ENCODE measurements at regions of chr1 and their contacts with region 1.

Region 1: DNA sequence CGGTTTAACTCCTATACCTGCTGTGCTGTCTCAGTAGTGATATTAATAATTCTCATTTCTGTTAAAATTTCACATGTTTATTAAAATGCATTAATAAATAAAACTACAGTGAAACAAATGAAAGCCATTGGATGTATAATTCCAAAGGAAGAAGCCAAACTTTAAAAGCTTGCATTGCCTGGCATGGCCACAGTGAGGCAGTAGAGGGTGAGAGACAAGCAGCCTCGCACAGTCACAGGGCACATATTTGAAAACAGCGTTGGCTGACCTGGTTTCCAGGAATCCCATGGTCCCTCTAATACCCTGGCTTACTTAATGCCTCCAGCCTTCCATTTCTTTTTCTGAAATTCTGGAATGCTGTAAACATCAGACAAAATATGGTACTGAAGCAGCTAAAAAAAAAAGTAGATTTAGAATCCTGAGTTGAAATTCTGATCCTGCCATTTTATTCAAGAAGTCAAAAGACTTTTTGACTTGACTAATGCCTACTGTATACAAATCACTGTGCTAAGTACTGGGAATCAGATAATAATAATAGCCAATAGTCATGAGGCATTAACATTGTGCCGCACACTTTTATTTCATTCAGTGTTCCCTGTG is 6.7 kb upstream of the RNASEL start:
- H3K4me3 ChIP-seq: no peak overlapping the region
- H3K27ac ChIP-seq: no peak overlapping the region
- H3K4me1 ChIP-seq: no peaks in the 10 kb centered on the region
- CTCF ChIP-seq: peak; percentile 52

Region 2: DNA sequence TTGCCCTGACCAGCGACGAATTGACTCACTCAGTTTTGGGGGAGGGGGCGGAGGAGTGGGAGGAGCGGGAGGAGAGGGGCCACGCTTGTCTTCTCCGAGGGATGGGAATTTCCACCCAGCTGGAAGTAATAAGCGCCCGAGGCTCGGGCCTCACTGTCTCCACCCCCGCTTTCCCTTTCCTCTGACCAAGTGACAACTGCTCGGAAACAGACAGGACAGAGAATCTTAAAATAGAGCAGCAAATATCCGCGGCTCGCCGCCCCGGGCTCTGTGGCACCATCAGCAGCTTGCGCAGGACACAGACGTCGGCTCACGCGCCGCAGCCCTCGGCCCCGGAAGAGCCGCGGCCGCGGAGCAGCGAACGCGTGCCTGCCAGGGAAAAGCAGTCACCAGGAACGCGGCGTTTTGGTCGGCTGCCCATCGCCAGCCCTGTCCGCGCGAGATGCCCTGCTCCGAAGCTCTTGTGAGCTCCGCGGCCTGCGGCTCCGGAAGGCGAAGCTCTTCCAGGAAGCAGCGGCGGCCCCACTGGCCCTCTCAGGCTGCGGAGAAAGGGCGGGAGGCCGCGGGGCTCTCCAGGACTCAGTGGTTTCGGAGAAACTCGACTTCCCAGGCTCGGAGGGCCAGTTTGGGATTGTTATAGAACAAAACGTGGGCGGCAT is 19.2 kb after region 1 on chr1:
- CTCF ChIA-PET with region 1: interaction called, 12 read pairs
- POLR2A ChIA-PET with region 1: no interaction called
- H3K4me3 ChIP-seq: peak overlapping the region; percentile 43
- H3K27ac ChIP-seq: peak overlapping the region; percentile 98
- H3K4me1 ChIP-seq: peaks cover 34% of the 10 kb centered on the region
- CTCF ChIP-seq: no peak

Region 3: GRCh38 chr1:182771187-182771984 is 175.6 kb after region 1 on chr1:
- CTCF ChIA-PET with region 1: interaction called, 10 read pairs
- POLR2A ChIA-PET with region 1: no interaction called
- H3K4me3 ChIP-seq: no peak overlapping the region
- H3K27ac ChIP-seq: no peak overlapping the region
- H3K4me1 ChIP-seq: no peaks in the 10 kb centered on the region
- CTCF ChIP-seq: no peak